ENCODE measurements at regions of chr3 and their contacts with region 1.

Region 1: GRCh38 chr3:190701096-190701532 is 161.4 kb downstream of the GMNC start:
- DNase-seq: peak in 1 of 2 experiments; percentile 21
- H3K4me3 ChIP-seq: no peak overlapping the region
- H3K27ac ChIP-seq: no peak overlapping the region
- H3K4me1 ChIP-seq: no peaks in the 10 kb centered on the region
- H3K27me3 ChIP-seq: no peaks in the 10 kb centered on the region
- CTCF ChIP-seq: peak in 2 of 3 experiments; percentile 61 to 74; a peak in 3 of 4 replicates
- EP300 ChIP-seq: no peak
- POLR2A ChIP-seq: no peak
- RAD21 ChIP-seq: peak; percentile 81 to 85

Region 2: GRCh38 chr3:190684733-190685132 is 16.4 kb before region 1 on chr3:
- CTCF ChIA-PET with region 1: interaction called, 11 read pairs
- POLR2A ChIA-PET with region 1: no interaction called
- DNase-seq: no peak
- H3K4me3 ChIP-seq: no peak overlapping the region
- H3K27ac ChIP-seq: no peak overlapping the region
- H3K4me1 ChIP-seq: no peaks in the 10 kb centered on the region
- H3K27me3 ChIP-seq: no peaks in the 10 kb centered on the region
- CTCF ChIP-seq: no peak
- EP300 ChIP-seq: no peak
- POLR2A ChIP-seq: no peak
- RAD21 ChIP-seq: no peak

Region 3: DNA sequence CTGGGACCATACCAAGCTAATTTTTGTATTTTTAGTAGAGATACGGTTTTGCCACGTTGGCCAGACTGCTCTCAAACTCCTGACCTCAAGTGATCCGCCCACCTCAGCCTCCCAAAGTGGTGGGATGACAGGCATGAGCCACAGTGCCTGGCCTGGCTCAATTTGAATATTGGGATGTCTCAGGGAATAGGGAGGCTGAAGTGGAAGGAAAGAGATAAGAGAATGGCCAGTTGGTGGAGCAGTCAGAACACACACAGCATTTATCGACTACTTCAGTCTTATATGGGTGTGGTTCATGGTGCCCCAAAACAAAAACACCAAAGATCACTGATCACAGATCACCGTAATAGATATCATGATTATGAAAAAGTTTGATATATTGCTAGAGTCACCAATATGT is 17.0 kb after region 1 on chr3:
- CTCF ChIA-PET with region 1: interaction called, 43 read pairs
- POLR2A ChIA-PET with region 1: no interaction called
- DNase-seq: no peak
- H3K4me3 ChIP-seq: no peak overlapping the region
- H3K27ac ChIP-seq: no peak overlapping the region
- H3K4me1 ChIP-seq: no peaks in the 10 kb centered on the region
- H3K27me3 ChIP-seq: no peaks in the 10 kb centered on the region
- CTCF ChIP-seq: peak in 2 of 3 experiments; percentile 18 to 29; a peak in 2 of 4 replicates
- EP300 ChIP-seq: no peak
- POLR2A ChIP-seq: no peak
- RAD21 ChIP-seq: peak; percentile 47 to 49

Region 4: DNA sequence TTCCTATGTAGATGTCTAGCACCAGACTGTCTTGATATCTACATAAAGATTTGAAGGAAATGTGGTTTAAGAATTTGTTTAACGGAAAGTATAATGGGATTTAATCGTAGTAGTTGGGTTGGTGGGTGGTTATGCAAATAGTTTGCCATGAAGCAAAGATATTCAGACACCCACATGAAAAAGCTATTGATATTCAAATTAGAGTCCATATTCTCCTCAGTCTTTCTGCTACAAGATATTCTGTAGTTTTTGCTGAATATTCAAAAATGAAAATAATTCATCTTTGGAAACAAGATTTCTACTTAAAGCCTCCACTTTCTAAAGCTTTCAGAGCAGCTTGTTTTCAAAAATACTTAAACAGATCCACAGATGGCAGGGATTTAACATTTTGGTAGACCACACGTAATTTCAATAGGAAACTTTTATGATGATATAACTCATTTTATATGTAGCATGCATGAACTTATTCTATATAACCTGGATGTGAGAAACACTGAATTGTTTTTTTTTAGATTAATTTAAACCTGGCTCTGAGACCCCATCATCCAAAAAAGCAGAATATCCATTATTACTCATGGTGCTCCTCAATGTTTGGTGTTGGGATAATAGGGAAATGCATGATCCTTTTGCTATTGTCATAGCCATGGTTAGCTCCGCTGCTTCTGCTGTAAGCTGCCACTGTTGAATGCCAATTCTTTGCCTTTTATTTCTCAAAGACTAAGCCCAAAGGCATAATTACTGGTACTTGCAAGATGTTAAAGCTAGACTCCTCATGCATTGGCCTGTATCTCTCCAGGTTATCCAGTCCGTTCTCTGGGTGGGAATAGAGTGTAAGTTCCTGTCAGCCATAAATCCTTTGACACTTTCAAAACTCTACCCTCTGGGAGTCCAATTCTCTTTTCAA is 63.4 kb after region 1 on chr3:
- CTCF ChIA-PET with region 1: no interaction called
- POLR2A ChIA-PET with region 1: no interaction called
- DNase-seq: no peak
- H3K4me3 ChIP-seq: no peak overlapping the region
- H3K27ac ChIP-seq: no peak overlapping the region
- H3K4me1 ChIP-seq: no peaks in the 10 kb centered on the region
- H3K27me3 ChIP-seq: peaks cover 0 to 1% (median 0%) of the 10 kb centered on the region in 4 experiments; a peak in 1 of 7 replicates
- CTCF ChIP-seq: no peak
- EP300 ChIP-seq: no peak
- POLR2A ChIP-seq: no peak
- RAD21 ChIP-seq: no peak

Region 5: GRCh38 chr3:190840146-190840545 is 139.0 kb after region 1 on chr3:
- CTCF ChIA-PET with region 1: no interaction called
- POLR2A ChIA-PET with region 1: no interaction called
- DNase-seq: no peak
- H3K4me3 ChIP-seq: no peak overlapping the region
- H3K27ac ChIP-seq: no peak overlapping the region
- H3K4me1 ChIP-seq: no peaks in the 10 kb centered on the region
- H3K27me3 ChIP-seq: peaks cover 0 to 1% (median 0%) of the 10 kb centered on the region in 4 experiments; a peak in 1 of 7 replicates
- CTCF ChIP-seq: no peak
- EP300 ChIP-seq: no peak
- POLR2A ChIP-seq: no peak
- RAD21 ChIP-seq: no peak